ENCODE measurements at regions of chr1 and their contacts with region 1.

Region 1: GRCh38 chr1:212791676-212792395 is at the starts of genes NSL1 and TATDN3:
- DNase-seq: peak; percentile 94
- H3K4me3 Mint-ChIP-seq: peak within 1 kb of the TSS; percentile 99
- H3K27ac Mint-ChIP-seq: peak within 1 kb of the TSS; percentile 90
- H3K4me1 Mint-ChIP-seq: peaks cover 33% of the 10 kb centered on the region
- H3K27me3 Mint-ChIP-seq: no peaks in the 10 kb centered on the region
- total RNA-seq, gene NSL1: 21.2 to 23.7 TPM
- total RNA-seq, gene TATDN3: 14.9 to 16.9 TPM

Region 2: GRCh38 chr1:211680752-211681327 is 1111.0 kb before region 1 on chr1:
- CTCF ChIA-PET with region 1: no interaction called
- intact Hi-C with region 1: loop called (anchors 5 kb)
- DNase-seq: peak; percentile 80
- H3K4me3 Mint-ChIP-seq: no peak overlapping the region
- H3K27ac Mint-ChIP-seq: peak overlapping the region; percentile 24
- H3K4me1 Mint-ChIP-seq: peaks cover 7% of the 10 kb centered on the region
- H3K27me3 Mint-ChIP-seq: no peaks in the 10 kb centered on the region

Region 3: DNA sequence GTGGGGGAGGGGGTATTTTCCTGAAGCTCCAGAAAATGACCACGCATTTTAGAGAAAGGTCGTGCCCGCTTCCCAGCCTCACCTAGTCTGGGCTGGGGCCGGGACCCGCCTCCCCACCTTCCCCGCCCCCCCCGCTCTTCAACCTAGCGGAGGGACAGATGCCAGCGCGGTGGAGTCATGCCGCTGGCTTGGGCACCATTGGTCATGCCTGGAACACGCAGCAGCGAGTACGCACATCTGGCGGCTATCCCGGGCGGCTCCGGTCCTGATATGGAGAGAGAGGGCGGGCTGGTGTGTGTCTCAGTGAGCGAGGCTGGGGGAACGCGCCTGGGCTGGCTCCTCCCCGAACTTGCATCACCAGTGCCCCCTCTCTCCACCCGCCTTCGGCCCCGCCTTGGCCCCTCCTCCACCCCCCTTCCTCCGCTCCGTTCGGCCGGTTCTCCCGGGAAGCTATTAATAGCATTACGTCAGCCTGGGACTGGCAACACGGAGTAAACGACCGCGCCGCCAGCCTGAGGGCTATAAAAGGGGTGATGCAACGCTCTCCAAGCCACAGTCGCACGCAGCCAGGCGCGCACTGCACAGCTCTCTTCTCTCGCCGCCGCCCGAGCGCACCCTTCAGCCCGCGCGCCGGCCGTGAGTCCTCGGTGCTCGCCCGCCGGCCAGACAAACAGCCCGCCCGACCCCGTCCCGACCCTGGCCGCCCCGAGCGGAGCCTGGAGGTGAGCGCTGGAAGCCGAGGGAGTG is 183.5 kb before region 1 on chr1 and contains the start of gene ATF3:
- CTCF ChIA-PET with region 1: no interaction called
- intact Hi-C with region 1: loop called (anchors 2 kb)
- DNase-seq: peak; percentile 98
- H3K4me3 Mint-ChIP-seq: peak within 1 kb of the TSS; percentile 90
- H3K27ac Mint-ChIP-seq: peak within 1 kb of the TSS; percentile 92
- H3K4me1 Mint-ChIP-seq: peaks cover 52% of the 10 kb centered on the region
- H3K27me3 Mint-ChIP-seq: peaks cover 43% of the 10 kb centered on the region
- total RNA-seq, gene ATF3: 67.4 to 67.7 TPM

Region 4: DNA sequence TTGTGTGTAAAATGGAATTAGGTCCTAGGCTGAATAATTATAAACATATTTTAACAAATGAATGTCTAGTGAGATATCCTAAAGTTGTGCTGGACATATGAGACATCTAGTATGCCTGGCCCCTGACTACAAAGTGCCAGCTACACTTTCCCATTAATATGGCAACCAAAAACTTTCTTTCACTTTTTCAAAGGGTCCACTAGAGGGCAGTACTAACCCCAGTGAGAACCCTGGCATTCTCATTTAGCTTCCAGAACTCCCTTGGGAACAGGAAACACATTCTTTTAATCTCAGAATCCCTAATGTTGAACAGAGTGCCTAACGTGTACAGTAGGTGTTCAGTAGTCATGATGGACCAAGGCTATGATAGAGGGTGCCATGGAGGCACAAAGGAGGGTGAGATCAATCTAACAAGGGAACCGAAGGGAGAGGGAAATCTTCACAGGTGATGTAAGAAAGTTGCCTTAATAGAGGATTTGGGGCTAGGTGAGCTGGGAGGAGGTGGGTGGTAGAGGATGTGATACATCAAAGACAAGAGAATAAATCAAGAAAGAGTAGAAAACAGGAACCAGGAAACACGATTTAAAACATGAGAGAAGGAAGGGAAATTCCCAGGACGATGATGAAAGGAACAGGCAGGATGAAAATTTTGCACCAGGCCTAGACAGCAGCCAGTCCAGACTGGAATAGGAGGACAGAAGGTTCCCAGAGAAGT is 41.9 kb before region 1 on chr1:
- CTCF ChIA-PET with region 1: interaction called, 3 read pairs
- intact Hi-C with region 1: loop called (anchors 2 kb)
- DNase-seq: peak; percentile 22
- H3K4me3 Mint-ChIP-seq: no peak overlapping the region
- H3K27ac Mint-ChIP-seq: peak overlapping the region; percentile 32
- H3K4me1 Mint-ChIP-seq: peaks cover 54% of the 10 kb centered on the region
- H3K27me3 Mint-ChIP-seq: no peaks in the 10 kb centered on the region

Region 5: GRCh38 chr1:212994926-212995325 is 203.1 kb after region 1 on chr1:
- CTCF ChIA-PET with region 1: interaction called, 6 read pairs
- intact Hi-C with region 1: loop called (anchors 1 kb)
- DNase-seq: no peak
- H3K4me3 Mint-ChIP-seq: no peak overlapping the region
- H3K27ac Mint-ChIP-seq: no peak overlapping the region
- H3K4me1 Mint-ChIP-seq: peaks cover 4% of the 10 kb centered on the region
- H3K27me3 Mint-ChIP-seq: no peaks in the 10 kb centered on the region

Region 6: GRCh38 chr1:213051127-213051880 is 259.5 kb after region 1 on chr1 and contains the start of gene RPS6KC1:
- CTCF ChIA-PET with region 1: no interaction called
- intact Hi-C with region 1: loop called (anchors 1 kb)
- DNase-seq: peak; percentile 88
- H3K4me3 Mint-ChIP-seq: peak within 1 kb of the TSS; percentile 97
- H3K27ac Mint-ChIP-seq: peak within 1 kb of the TSS; percentile 82
- H3K4me1 Mint-ChIP-seq: peaks cover 30% of the 10 kb centered on the region
- H3K27me3 Mint-ChIP-seq: peaks cover 13% of the 10 kb centered on the region
- total RNA-seq, gene RPS6KC1: 5.4 to 6.1 TPM

Measured in activated naive CD4-positive, alpha-beta T cell treated with anti-CD3 and anti-CD28 coated beads for 36 hours (primary cell).